GM18951 (cell line): ENCODE measurements at regions of chr11 and their contacts with region 1.

Region 1: DNA sequence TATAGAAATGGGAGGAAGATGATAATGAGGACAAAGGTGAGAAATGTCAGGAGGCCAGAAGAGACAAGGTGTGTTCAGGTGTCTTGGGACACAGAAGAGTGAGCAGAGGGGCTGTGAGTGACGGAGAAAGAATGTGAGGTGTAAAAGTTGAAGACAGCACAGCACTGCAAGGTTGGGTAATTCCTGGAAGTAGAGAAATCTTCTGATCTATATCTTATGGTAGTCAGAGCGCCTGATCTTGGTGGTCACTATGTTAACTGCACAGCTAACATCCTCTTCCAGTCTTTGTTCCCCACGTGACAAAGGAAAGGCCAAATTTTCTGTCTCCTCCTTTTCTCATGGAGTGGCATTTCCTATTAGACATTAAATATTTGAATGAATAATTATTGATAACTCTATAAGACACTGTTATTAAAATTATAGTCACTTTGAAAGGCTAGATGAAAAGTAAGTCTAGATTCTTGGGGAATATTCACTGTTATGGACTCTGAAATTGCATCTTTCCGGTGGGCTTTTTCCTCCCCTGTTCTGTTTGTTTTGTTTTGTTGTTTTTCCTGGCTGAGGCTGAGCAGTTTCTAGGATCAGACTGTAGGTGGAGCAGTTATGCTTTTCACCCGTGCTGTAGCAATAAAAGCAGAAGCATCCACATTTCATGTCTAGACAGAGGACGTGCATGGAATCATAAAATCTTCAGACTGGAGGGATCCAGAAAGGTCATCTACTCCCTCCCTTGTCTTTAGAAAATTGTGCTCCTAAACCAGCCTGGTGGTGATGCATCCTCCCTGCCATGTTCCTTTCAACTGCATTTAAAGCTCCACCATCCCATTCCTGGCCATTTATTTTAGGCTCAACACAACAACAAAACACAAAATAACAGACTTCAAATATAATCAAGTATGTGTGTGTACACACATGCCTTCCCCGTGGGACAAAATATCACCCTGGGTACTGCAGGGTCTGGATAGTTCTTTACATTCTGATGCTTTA is 26.6 kb downstream of the SC5D start:
- POLR2A ChIP-seq: no peak

Region 2: GRCh38 chr11:121091492-121092152 is 227.5 kb before region 1 on chr11:
- in situ Hi-C with region 1: no loop called
- POLR2A ChIP-seq: no peak

Region 3: DNA sequence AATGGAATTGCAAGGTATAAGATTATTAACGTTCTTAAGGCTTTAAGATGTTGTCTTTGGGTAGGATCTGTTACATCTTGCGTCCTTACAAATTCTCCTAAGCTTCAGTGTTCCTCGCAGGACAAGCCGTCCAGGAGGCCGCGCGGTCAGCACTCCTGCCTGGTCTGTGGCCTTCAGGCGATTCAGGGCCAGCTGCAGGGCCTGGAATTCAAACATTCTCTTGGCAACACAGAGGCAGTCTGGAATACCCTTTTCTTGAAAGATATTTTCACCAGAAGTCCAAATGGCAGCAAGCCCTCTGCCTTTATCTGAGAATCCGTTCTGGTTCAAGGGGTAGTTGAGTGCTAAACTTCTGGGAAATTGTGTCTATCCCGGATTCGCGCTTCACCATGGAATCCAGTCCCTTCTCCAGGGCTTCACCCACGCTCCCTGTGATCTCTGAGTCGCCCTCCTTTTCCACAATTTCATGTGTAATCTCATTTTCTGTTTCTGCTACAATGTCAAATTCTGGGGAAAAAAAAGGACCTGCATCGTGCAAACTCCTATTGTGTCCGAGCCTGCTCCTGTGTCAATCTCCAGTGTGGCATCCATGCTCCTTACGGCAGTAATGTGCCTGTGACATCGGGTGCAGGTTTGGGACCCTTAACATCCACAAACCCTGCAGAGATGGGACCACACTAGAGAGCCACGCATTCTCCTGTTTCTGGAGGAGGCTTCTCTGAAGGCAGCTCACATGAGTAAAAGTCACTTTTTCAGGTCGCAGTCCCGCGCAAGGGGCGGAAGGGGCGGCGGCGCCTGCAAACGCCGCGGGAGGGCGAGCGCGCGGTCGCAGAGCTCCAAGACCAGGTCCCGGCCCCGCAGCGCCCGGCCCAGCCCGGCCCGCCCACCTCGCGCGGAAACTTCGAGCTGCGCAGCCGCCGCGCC is 107.6 kb after region 1 on chr11:
- in situ Hi-C with region 1: loop called (anchors 10 kb)
- POLR2A ChIP-seq: peak; percentile 9

Region 4: GRCh38 chr11:121534131-121535093 is 215.3 kb after region 1 on chr11:
- in situ Hi-C with region 1: loop called (anchors 10 kb)
- POLR2A ChIP-seq: no peak

Region 5: GRCh38 chr11:121591405-121592033 is 272.4 kb after region 1 on chr11:
- in situ Hi-C with region 1: loop called (anchors 5 kb)
- POLR2A ChIP-seq: no peak

Region 6: DNA sequence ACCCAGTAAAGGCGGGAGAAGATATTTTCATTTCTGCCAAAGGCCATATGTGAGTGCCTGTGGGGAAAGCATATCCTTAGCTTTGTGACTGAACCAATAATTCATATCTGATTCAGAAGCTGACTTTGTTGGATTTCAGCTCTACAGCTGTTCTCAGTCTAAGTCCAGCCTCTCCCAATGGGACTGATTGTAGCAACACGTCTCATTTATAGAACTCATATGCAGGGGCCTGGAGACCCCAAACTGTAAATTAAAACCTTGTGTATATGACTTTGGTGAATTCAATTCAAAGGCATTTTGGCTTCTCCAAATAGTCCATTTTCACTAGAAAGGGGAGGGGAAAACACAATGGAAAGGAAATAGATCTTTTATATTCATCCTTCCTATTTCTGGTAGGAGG is 384.1 kb after region 1 on chr11:
- in situ Hi-C with region 1: no loop called
- POLR2A ChIP-seq: no peak